ENCODE measurements at regions of chr1 and their contacts with region 1.

Region 1: DNA sequence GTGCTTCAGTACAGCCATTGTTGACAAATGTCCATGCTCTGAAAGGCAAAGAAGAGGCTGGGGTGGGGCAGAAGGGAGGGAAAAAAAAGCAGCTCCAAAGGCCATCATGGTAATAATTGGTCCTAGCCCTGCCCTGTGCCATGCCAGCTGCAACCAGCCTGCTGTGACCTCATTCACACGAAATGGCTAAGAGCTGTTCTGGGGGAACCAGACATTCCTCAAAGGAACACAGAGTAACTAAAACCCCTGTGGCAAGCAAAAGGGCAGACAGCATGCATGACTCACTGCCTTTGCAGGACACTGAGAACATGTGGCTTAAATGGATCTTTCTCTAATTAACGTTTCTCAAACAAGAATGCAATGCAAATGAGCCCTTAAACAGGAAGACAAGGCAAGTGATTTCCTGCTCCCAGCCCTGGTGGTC is 42.3 kb downstream of the STYXL2 start:
- DNase-seq: peak; percentile 85
- H3K4me3 Mint-ChIP-seq: no peak overlapping the region
- H3K27ac Mint-ChIP-seq: no peak overlapping the region
- H3K4me1 Mint-ChIP-seq: peaks cover 21% of the 10 kb centered on the region
- H3K27me3 Mint-ChIP-seq: no peaks in the 10 kb centered on the region
- CTCF ChIP-seq: no peak

Region 2: DNA sequence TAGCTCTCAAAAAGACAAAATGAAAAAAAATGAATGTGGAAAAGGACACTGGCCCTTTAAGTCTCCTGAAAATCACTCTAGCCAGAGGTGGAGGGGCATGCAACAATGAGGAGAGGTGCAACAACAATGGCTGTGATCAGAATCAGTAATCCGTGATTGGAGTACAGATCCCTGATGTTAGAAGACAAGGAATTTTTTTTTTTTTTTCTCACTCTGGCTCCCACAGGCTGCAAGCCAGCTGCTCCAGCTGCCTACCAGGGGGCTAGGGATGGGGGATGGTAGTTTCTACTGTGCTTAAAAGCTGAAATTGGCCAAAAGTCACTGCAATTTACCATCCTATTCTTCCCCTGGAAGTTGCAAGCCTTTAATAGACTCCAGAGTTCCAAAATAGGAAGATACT is 12.2 kb after region 1 on chr1:
- CTCF ChIA-PET with region 1: interaction called, 10 read pairs
- POLR2A ChIA-PET with region 1: interaction called, 4 read pairs
- intact Hi-C with region 1: no loop called
- DNase-seq: no peak
- H3K4me3 Mint-ChIP-seq: no peak overlapping the region
- H3K27ac Mint-ChIP-seq: no peak overlapping the region
- H3K4me1 Mint-ChIP-seq: peaks cover 11% of the 10 kb centered on the region
- H3K27me3 Mint-ChIP-seq: no peaks in the 10 kb centered on the region
- CTCF ChIP-seq: no peak

Region 3: GRCh38 chr1:167207940-167208623 is 71.9 kb after region 1 on chr1:
- CTCF ChIA-PET with region 1: no interaction called
- POLR2A ChIA-PET with region 1: no interaction called
- intact Hi-C with region 1: no loop called
- DNase-seq: no peak
- H3K4me3 Mint-ChIP-seq: no peak overlapping the region
- H3K27ac Mint-ChIP-seq: no peak overlapping the region
- H3K4me1 Mint-ChIP-seq: peaks cover 7% of the 10 kb centered on the region
- H3K27me3 Mint-ChIP-seq: no peaks in the 10 kb centered on the region
- CTCF ChIP-seq: peak; percentile 17